MCF 10A (cell line): ENCODE measurements at regions of chr12 and their contacts with region 1.

Region 1: DNA sequence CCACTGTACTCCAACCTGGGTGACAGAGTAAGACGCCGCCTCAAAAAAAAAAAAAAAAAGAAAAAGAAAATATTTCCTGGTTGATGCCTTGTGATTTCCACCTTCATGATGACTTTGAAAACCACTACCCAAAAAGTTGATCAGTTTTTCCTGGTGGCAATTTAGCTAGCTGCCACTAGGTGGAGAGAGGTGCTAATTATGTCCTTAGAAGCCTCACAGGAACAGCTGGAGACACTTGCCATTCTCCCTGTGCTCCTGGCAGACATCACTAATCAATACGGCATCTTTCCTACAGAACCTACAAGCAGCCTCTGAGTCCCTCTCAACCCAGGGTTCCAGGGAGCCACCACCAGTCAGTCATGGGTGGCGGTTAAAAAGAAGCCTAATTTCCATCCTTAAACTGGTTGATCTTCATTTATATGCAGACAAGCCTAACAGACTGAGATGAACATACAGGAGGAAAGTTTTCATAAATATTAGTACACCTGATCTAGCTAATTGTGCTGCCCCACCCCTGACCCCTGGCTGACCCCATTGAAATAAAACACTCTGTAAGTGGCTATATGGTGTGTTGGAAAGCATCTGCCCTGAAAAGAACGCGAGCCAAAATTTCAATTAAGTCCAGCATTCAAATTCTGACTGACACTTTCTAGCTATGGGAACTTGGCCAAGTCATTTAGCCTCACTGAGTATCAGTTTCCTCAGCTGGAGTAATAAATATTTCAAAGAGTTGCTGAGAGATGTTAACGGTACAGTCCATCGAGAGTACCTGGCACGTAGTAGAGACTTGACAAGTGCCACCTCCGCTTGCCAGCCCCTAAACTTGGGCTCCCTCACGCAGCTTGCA is 6.2 kb upstream of the OAS1 start:
- DNase-seq: peak; percentile 74
- H3K4me3 Mint-ChIP-seq: no peak overlapping the region
- H3K27ac Mint-ChIP-seq: no peak overlapping the region
- H3K4me1 Mint-ChIP-seq: peaks cover 33% of the 10 kb centered on the region
- H3K27me3 Mint-ChIP-seq: peaks cover 28% of the 10 kb centered on the region
- CTCF ChIP-seq: peak; percentile 64

Region 2: DNA sequence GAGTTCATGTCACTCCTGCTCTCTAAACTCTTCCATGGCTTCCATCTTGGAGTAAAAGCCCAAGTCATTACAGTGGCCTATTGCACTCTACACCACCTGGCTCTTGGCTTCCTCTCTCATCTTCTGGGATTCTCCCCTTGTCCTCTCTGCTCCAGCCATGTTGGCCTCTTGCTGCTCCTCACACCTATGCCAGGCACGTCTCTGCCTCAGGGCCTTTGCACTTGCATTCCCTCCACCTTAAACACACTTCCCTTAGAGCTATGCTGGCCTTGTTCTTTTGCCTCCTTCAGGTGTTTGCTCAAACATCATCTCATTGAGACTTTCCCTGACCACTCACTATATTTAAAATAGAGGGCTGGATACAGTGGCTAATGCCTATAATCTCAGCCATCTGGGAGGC is 132.2 kb before region 1 on chr12:
- CTCF ChIA-PET with region 1: no interaction called
- POLR2A ChIA-PET with region 1: no interaction called
- intact Hi-C with region 1: no loop called
- DNase-seq: no peak
- H3K4me3 Mint-ChIP-seq: no peak overlapping the region
- H3K27ac Mint-ChIP-seq: no peak overlapping the region
- H3K4me1 Mint-ChIP-seq: no peaks in the 10 kb centered on the region
- H3K27me3 Mint-ChIP-seq: peaks cover 62% of the 10 kb centered on the region
- CTCF ChIP-seq: no peak

Region 3: DNA sequence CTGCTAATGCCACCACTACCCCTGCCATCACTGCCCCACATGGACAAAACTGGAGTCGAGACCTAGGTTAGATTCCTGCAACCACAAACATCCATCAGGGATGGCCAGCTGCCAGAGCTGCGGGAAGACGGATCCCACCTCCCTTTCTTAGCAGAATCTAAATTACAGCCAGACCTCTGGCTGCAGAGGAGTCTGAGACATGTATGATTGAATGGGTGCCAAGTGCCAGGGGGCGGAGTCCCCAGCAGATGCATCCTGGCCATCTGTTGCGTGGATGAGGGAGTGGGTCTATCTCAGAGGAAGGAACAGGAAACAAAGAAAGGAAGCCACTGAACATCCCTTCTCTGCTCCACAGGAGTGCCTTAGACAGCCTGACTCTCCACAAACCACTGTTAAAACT is 70.7 kb after region 1 on chr12:
- CTCF ChIA-PET with region 1: no interaction called
- POLR2A ChIA-PET with region 1: no interaction called
- intact Hi-C with region 1: no loop called
- DNase-seq: no peak
- H3K4me3 Mint-ChIP-seq: no peak overlapping the region
- H3K27ac Mint-ChIP-seq: no peak overlapping the region
- H3K4me1 Mint-ChIP-seq: no peaks in the 10 kb centered on the region
- H3K27me3 Mint-ChIP-seq: no peaks in the 10 kb centered on the region
- CTCF ChIP-seq: no peak

Region 4: GRCh38 chr12:113005754-113006153 is 105.2 kb after region 1 on chr12:
- CTCF ChIA-PET with region 1: interaction called, 11 read pairs
- POLR2A ChIA-PET with region 1: no interaction called
- intact Hi-C with region 1: no loop called
- DNase-seq: peak; percentile 46
- H3K4me3 Mint-ChIP-seq: no peak overlapping the region
- H3K27ac Mint-ChIP-seq: no peak overlapping the region
- H3K4me1 Mint-ChIP-seq: peaks cover 7% of the 10 kb centered on the region
- H3K27me3 Mint-ChIP-seq: no peaks in the 10 kb centered on the region
- CTCF ChIP-seq: peak; percentile 31

Region 5: DNA sequence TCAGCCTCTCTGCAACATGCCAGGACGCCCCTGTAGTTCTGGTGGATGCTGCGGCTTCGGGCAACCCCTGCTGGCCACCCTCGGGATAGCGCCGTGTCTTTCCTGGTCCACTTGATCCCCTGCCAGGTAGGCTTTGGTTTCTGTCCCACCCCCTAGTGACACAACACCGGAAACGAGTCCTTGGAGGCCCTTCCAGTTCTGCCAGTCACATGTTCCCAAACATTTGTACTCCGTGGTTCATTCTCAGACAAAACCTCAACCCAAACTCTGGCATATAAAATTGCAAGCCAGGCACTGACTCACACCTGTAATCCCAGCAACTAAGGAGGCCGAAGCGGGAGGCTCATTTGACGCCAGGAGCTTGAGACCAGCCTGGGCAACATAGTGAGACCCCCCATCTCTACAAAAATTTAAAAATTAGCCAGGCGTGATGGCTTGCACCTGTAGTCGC is 197.9 kb after region 1 on chr12:
- CTCF ChIA-PET with region 1: no interaction called
- POLR2A ChIA-PET with region 1: no interaction called
- intact Hi-C with region 1: no loop called
- DNase-seq: peak; percentile 97
- H3K4me3 Mint-ChIP-seq: peak overlapping the region; percentile 10
- H3K27ac Mint-ChIP-seq: no peak overlapping the region
- H3K4me1 Mint-ChIP-seq: no peaks in the 10 kb centered on the region
- H3K27me3 Mint-ChIP-seq: no peaks in the 10 kb centered on the region
- CTCF ChIP-seq: peak; percentile 90